Heart left ventricle (tissue), 16 donors: ENCODE measurements at regions of chr5 and their contacts with region 1.

Region 1: GRCh38 chr5:146049014-146049703 is 56.2 kb downstream of the PLAC8L1 start:
- DNase-seq: peak in 3 of 5 donors; percentile 27 to 36 (median 32)
- ATAC-seq: peak in 3 of 4 donors; percentile 62 to 70 (median 69)
- H3K4me3 ChIP-seq: no peak overlapping the region
- H3K27ac ChIP-seq: no peak overlapping the region
- H3K4me1 ChIP-seq: peaks cover 0 to 7% (median 0%) of the 10 kb centered on the region in 12 donors
- H3K27me3 ChIP-seq: no peaks in the 10 kb centered on the region
- CTCF ChIP-seq: peak; percentile 46 to 76 (median 69)
- POLR2A ChIP-seq: no peak

Region 2: GRCh38 chr5:145689235-145689634 is 359.9 kb before region 1 on chr5:
- intact Hi-C with region 1: loop called in 9 of 10 experiments (anchors 5 kb)
- DNase-seq: no peak
- ATAC-seq: peak in 2 of 4 donors; percentile 48 to 69
- H3K4me3 ChIP-seq: no peak overlapping the region
- H3K27ac ChIP-seq: peak overlapping the region in 1 of 12 donors; percentile 61
- H3K4me1 ChIP-seq: peaks cover 0 to 15% (median 0%) of the 10 kb centered on the region in 12 donors
- H3K27me3 ChIP-seq: no peaks in the 10 kb centered on the region
- CTCF ChIP-seq: no peak
- POLR2A ChIP-seq: no peak

Region 3: DNA sequence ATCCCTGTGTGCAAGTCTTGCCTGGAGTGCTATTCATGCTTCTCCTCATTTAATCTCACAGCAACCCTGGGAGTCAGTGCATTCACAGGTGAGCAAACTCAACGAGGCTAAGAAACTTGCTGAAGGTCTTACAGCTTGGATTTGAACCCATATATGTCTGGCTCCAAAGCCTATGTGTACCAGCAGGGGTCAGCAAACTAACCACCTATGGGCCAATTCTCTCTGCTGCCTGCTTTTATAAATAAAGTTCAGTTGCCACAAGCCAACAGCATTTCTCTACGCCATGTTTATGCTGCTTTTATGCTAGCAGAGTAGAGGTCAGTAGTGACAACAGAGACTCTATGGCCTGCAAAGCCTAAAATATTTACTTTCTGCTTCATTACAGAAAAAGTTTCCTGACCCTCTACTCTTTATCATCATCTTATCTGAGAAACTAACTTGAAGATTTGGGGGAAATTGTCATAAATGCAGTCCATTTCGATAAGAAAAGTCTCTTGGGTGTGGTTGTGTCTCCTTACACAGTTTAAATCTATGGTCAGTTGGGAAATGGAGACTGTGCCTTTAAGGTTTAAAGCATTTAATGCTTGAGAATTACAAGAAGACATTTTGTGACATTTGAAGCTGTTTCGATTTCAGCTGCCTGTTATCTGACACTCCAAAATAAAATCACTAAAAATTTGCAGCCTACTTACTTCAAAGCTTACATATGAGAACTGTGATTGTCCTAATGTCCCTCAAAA is 351.7 kb before region 1 on chr5:
- intact Hi-C with region 1: loop called in 1 of 10 experiments (anchors 5 kb)
- DNase-seq: no peak
- ATAC-seq: no peak
- H3K4me3 ChIP-seq: no peak overlapping the region
- H3K27ac ChIP-seq: no peak overlapping the region
- H3K4me1 ChIP-seq: peaks cover 0 to 7% (median 0%) of the 10 kb centered on the region in 12 donors
- H3K27me3 ChIP-seq: no peaks in the 10 kb centered on the region
- CTCF ChIP-seq: peak in 11 of 12 donors; percentile 18 to 51 (median 36)
- POLR2A ChIP-seq: no peak

Region 4: GRCh38 chr5:145834917-145835847 is 214.0 kb before region 1 on chr5 and contains the start of gene PRELID2:
- intact Hi-C with region 1: loop called in 8 of 10 experiments (anchors 5 to 10 kb)
- DNase-seq: peak; percentile 89 to 93 (median 91)
- ATAC-seq: peak; percentile 88 to 97 (median 95)
- H3K4me3 ChIP-seq: peak within 1 kb of the TSS; percentile 65 to 85 (median 76)
- H3K27ac ChIP-seq: peak within 1 kb of the TSS; percentile 40 to 82 (median 69)
- H3K4me1 ChIP-seq: peaks cover 0 to 26% (median 13%) of the 10 kb centered on the region in 12 donors
- H3K27me3 ChIP-seq: no peaks in the 10 kb centered on the region
- CTCF ChIP-seq: peak in 3 of 12 donors; percentile 12 to 32 (median 28)
- POLR2A ChIP-seq: peak in 1 of 2 donors; percentile 75
- total RNA-seq, gene PRELID2: 6.5 to 26.7 (median 10.6) TPM

Region 5: DNA sequence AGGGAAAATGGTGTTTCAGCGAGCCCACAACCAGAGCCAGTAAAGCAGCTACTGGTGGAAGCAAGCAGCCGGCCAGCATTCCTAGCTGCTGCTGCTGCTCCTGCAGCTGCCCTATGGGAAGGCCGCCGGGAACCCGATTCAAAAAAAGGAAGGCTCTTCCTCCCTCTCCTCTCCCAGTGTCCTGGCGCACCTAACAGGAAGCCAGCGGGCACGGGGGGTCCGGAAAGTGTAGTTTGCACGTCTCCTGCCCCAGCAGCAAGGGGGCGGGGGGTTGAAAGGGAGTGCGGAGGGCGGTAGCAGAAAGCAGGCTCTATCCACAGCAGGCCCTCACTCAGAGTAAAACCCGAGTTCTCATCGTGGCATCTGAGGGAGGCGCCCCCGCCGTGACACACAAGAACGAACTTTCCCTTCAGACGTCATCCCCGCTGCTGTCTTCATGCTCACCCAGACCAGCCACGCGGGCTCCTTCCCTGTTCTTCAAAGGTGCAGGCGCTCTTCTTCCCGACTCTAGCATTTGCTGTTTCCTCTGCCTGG is 192.8 kb before region 1 on chr5:
- intact Hi-C with region 1: loop called in 1 of 10 experiments (anchors 10 kb)
- DNase-seq: peak; percentile 27 to 65 (median 43)
- ATAC-seq: peak; percentile 61 to 85 (median 81)
- H3K4me3 ChIP-seq: peak overlapping the region; percentile 1 to 57 (median 46)
- H3K27ac ChIP-seq: peak overlapping the region in 7 of 12 donors; percentile 2 to 54 (median 37)
- H3K4me1 ChIP-seq: peaks cover 0 to 15% (median 7%) of the 10 kb centered on the region in 12 donors
- H3K27me3 ChIP-seq: no peaks in the 10 kb centered on the region
- CTCF ChIP-seq: peak in 3 of 12 donors; percentile 18 to 21 (median 20)
- POLR2A ChIP-seq: no peak

Region 6: DNA sequence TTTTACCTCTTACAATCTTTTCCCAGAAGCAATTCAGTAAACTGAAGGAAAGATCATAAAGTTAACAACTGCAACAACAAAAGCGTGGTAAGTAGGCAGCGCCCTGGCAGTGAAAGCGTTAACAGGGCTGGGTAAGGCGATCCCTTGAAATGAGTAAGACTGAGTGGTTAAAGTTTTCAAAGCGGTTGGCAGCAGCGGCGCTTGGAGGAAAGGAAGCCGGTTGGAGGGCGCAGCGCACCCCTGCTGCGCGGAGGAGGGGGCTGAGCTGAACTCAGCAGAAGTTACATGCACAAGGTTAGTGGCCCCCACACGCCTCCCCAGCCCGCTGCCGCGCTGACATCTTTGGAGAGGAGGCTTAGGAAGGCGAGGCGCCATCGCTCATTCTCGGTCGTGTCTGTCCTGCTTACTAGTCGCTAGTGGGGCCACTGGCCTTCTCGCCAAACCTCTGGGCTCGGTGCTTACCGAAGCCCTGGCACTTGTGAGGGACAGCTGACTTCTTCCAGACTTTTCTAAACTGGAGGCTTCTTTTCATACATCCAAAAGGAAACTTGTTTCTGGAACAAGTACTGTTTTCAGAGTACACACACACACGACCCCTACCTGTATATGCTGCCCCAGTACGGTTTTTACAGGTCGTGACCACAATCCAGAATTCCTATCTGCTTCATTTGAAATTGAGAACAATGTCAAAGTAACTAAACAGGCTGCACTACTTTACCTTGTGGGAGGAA is 112.6 kb before region 1 on chr5 and contains the start of gene SH3RF2:
- intact Hi-C with region 1: loop called in 4 of 10 experiments (anchors 5 to 10 kb)
- DNase-seq: peak; percentile 12 to 67 (median 33)
- ATAC-seq: peak; percentile 67 to 89 (median 87)
- H3K4me3 ChIP-seq: peak within 1 kb of the TSS; percentile 10 to 62 (median 52)
- H3K27ac ChIP-seq: peak within 1 kb of the TSS in 10 of 12 donors; percentile 10 to 64 (median 38)
- H3K4me1 ChIP-seq: peaks cover 0 to 23% (median 13%) of the 10 kb centered on the region in 12 donors
- H3K27me3 ChIP-seq: peaks cover 0 to 13% (median 0%) of the 10 kb centered on the region in 9 donors
- CTCF ChIP-seq: no peak
- POLR2A ChIP-seq: no peak
- total RNA-seq, gene SH3RF2: 83.2 to 495 (median 180) TPM

Region 7: DNA sequence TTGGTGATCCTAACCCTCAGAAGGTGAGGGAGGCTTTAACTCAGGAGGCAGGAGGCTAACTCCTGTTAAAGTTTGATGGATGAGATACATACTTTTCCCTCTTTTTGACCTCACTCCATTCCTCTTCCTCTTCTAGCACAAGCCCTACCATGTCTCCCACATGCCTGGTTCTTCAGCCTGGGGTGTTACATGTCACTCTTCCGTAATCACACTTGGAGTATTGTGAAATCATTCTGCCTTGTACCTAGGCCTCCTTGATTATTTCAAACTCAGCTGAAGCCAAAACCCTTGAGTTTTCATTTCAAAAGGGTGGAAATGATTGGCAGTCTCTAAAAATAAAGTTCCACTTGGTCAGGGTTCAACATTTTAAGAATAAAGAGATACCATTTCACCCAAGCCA is 54.4 kb after region 1 on chr5:
- intact Hi-C with region 1: no loop called
- DNase-seq: peak in 1 of 5 donors; percentile 40
- ATAC-seq: peak; percentile 82 to 96 (median 90)
- H3K4me3 ChIP-seq: no peak overlapping the region
- H3K27ac ChIP-seq: peak overlapping the region in 9 of 12 donors; percentile 20 to 74 (median 58)
- H3K4me1 ChIP-seq: peaks cover 0 to 14% (median 0%) of the 10 kb centered on the region in 12 donors
- H3K27me3 ChIP-seq: no peaks in the 10 kb centered on the region
- CTCF ChIP-seq: no peak
- POLR2A ChIP-seq: no peak

Region 8: GRCh38 chr5:146124580-146124979 is 75.4 kb after region 1 on chr5:
- intact Hi-C with region 1: loop called in 1 of 10 experiments (anchors 10 kb)
- DNase-seq: no peak
- ATAC-seq: no peak
- H3K4me3 ChIP-seq: no peak overlapping the region
- H3K27ac ChIP-seq: no peak overlapping the region
- H3K4me1 ChIP-seq: no peaks in the 10 kb centered on the region
- H3K27me3 ChIP-seq: no peaks in the 10 kb centered on the region
- CTCF ChIP-seq: no peak
- POLR2A ChIP-seq: no peak